ENCODE measurements at regions of chr1 and their contacts with region 1.

Region 1: GRCh38 chr1:12124693-12125421 is 41.9 kb upstream of the TNFRSF1B start:
- DNase-seq: peak; percentile 82
- H3K4me3 Mint-ChIP-seq: no peak overlapping the region
- H3K27ac Mint-ChIP-seq: peak overlapping the region; percentile 61
- H3K4me1 Mint-ChIP-seq: peaks cover 28% of the 10 kb centered on the region
- H3K27me3 Mint-ChIP-seq: no peaks in the 10 kb centered on the region

Region 2: DNA sequence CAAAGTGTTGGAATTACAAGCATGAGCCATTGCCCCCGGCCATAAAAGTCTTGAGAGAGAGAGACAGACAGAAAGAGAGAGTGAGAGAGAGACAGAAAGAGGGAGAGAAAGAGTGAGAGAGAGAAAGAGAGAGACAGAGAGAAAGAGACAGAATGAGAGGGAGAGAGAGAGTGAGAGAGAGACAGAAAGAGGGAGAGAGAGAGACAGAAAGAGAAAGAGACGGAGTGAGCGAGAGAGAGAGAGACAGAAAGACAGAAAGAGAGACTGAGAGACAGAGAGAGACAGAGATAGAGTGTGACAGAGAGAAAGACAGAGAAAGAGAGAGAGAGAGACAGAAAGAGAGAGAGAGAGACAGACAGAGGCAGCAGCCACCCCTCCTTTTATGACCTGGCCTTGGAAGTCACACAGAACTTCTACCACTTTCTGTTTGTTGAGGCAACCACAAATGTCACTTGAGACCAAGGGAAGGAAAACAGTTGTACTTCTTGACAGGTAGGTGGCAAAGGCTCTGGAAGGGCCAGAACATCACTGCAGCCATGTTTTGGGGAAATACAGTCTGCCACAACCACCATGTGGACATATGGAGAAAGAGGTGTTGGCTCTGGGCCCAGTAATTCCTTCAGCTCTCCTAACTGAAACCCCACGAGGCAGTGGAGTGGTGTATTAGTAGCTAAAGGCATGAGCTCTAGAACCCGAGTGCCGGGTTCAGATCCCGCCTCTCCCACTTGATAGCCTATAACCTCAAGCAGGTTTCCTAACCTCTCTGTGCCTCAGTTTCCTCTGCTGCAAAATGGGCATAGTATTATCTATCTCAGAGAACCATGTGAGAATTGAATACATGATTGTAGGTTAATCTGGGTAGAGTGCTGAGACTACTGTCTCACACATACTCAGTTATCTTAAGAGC is 11.2 kb before region 1 on chr1:
- CTCF ChIA-PET with region 1: interaction called, 11 read pairs
- POLR2A ChIA-PET with region 1: no interaction called
- DNase-seq: no peak
- H3K4me3 Mint-ChIP-seq: no peak overlapping the region
- H3K27ac Mint-ChIP-seq: peak overlapping the region; percentile 51
- H3K4me1 Mint-ChIP-seq: peaks cover 19% of the 10 kb centered on the region
- H3K27me3 Mint-ChIP-seq: no peaks in the 10 kb centered on the region

Region 3: DNA sequence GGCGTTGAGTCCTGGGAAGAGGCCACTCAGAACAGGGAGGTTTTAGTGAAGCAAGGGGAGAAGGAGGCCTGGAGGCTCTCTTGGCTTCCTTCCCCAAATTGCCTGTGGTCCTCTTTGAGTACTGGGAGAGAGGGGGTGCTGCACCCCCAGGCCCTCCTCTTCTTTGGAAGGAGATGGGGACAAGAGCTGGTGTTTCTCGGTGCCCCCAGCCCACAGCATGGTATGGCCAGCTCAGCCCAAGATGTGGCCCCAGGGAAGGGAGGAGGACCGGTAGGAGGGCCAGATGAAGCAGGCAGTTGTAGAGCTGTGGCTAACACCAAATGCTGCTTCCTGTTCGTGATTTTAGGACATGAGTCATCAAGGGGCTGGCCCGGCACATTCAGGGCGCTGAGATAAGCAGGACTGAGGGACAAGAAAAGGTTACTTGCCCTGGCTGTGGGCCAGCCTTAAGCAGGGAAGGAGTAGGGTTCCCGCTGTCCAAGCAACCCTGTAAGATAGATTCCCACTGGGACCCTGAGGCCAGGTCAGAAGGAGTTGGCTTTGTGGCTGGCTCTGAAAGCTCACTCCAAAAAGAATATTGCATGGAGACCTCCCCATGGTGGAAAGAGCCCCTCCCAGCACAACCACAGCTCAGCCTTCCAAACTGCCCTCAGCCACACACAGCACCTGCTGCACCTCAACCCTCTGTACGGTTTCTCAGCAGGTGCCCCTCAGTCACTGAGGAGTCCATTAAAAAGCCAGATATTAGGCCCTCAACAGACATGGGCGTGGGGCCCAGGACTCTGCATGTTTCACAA is 37.0 kb after region 1 on chr1:
- CTCF ChIA-PET with region 1: interaction called, 18 read pairs
- POLR2A ChIA-PET with region 1: interaction called, 31 read pairs
- DNase-seq: peak; percentile 90
- H3K4me3 Mint-ChIP-seq: peak overlapping the region; percentile 49
- H3K27ac Mint-ChIP-seq: peak overlapping the region; percentile 98
- H3K4me1 Mint-ChIP-seq: peaks cover 86% of the 10 kb centered on the region
- H3K27me3 Mint-ChIP-seq: no peaks in the 10 kb centered on the region

Region 4: DNA sequence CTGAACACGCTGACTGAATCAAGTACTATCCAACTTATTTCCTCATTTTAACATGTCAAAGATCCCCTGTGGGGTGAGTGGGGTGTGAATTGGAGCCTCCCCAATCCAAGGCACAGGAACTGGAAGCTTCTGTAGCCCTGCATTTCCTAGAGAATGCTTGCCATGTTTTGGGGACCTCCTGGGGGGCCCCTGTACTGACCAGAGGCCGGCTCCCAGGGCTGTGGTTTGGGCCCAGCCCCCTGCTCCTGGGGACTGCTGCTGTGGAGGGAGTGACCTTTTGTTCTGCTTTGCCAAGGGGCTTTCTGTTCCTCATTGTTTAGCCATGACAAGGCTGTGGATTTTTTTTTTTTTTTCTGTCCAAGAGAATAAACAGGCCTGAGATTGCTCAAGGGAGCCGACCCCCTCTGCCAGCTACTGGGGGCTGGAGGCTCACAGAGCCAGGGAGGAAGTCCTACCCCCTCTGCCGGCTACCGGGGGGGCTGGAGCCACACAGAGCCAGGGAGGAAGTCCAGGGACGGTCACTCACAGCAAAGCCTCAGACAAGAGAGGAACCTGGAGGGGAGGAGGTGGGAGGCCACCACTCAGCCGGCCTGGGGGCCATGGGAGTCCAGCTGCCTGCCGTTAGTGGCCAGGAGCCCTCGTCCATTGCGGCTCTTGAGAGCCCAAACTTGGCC is 59.3 kb after region 1 on chr1:
- CTCF ChIA-PET with region 1: interaction called, 85 read pairs
- POLR2A ChIA-PET with region 1: interaction called, 32 read pairs
- DNase-seq: no peak
- H3K4me3 Mint-ChIP-seq: no peak overlapping the region
- H3K27ac Mint-ChIP-seq: no peak overlapping the region
- H3K4me1 Mint-ChIP-seq: peaks cover 60% of the 10 kb centered on the region
- H3K27me3 Mint-ChIP-seq: no peaks in the 10 kb centered on the region

Region 5: GRCh38 chr1:12220890-12221289 is 96.0 kb after region 1 on chr1:
- CTCF ChIA-PET with region 1: interaction called, 10 read pairs
- POLR2A ChIA-PET with region 1: no interaction called
- DNase-seq: no peak
- H3K4me3 Mint-ChIP-seq: no peak overlapping the region
- H3K27ac Mint-ChIP-seq: no peak overlapping the region
- H3K4me1 Mint-ChIP-seq: no peaks in the 10 kb centered on the region
- H3K27me3 Mint-ChIP-seq: peaks cover 13% of the 10 kb centered on the region

Region 6: DNA sequence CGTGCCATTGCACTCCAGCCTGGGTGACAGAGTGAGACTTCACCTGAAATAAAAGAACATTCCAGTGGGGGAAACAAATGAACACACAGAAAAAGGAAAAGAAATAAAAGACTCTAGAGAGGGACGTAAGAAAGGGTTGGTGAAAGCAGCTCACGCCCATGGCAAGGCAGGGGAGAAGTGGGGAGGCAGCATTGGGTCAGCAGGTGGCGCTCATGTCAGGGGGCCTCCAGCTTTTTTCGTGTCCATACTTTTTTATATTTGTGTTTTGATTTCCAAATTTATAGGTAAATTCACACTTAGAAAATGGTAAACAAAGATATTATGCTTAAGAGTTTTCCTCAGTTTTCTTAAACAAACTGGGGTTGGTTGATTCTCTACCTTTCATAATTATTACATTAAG is 150.5 kb after region 1 on chr1:
- CTCF ChIA-PET with region 1: interaction called, 18 read pairs
- POLR2A ChIA-PET with region 1: interaction called, 3 read pairs
- DNase-seq: peak; percentile 43
- H3K4me3 Mint-ChIP-seq: no peak overlapping the region
- H3K27ac Mint-ChIP-seq: no peak overlapping the region
- H3K4me1 Mint-ChIP-seq: no peaks in the 10 kb centered on the region
- H3K27me3 Mint-ChIP-seq: no peaks in the 10 kb centered on the region